ENCODE measurements at regions of chr4 and their contacts with region 1.

Region 1: GRCh38 chr4:168923526-168924194 is 86.4 kb downstream of the CBR4 start:
- DNase-seq: peak; percentile 12 to 65 (median 26)
- H3K4me3 ChIP-seq: no peak overlapping the region
- H3K4me3 Mint-ChIP-seq: no peak overlapping the region
- H3K27ac ChIP-seq: no peak overlapping the region
- H3K27ac Mint-ChIP-seq: no peak overlapping the region
- H3K4me1 ChIP-seq: no peaks in the 10 kb centered on the region
- H3K4me1 Mint-ChIP-seq: peaks cover 0 to 4% (median 0%) of the 10 kb centered on the region in 3 donors
- H3K27me3 ChIP-seq: no peaks in the 10 kb centered on the region
- H3K27me3 Mint-ChIP-seq: peaks cover 0 to 1% of the 10 kb centered on the region in 2 donors

Region 2: DNA sequence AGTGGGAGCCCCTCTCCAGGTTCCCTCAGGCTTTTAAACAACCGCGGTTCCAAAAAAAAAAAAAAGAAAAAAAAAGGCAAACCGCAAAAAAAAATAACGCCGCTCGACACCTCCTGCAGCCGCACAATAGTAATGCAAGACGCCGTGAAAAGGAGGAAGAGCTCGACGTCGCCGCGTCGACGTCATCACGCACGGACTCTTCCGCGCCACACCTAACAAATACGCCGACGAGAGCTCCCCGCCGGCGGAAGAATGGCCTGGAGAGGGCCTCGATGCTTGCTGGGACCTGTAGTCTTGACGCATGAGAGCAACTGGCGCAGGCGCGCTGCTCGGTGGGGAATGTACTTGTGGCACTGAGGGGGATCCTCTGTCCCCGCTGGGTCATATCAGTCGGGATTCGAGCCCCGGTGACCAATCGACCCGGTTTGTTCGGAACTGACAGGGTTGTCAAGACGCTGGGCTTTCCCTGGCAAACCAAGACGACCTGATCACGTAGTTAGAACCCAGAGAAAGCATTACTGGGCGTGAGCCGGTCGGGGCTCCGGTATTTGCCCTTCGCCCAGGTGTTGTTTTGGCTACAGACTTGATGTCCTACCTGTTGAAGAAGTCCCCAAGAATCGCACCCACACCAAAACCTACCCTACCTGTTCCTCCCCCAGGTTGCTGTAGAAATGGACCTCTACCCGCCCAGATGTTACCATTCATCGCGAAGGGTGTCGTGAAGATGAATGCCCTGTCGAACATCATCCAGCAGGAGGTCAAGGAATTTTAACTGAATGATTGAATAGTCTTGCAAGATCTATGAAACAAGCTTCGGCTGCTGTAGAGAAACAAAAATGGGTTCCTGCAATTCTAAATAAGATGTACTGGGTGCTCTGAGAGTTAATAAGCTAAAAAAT is 86.7 kb after region 1 on chr4 and contains the start of gene CBR4:
- CTCF ChIA-PET with region 1: interaction called, 12 read pairs
- POLR2A ChIA-PET with region 1: no interaction called
- DNase-seq: peak; percentile 94 to 98 (median 95)
- H3K4me3 ChIP-seq: peak within 1 kb of the TSS; percentile 97
- H3K4me3 Mint-ChIP-seq: peak within 1 kb of the TSS; percentile 92 to 97 (median 95)
- H3K27ac ChIP-seq: peak within 1 kb of the TSS; percentile 92
- H3K27ac Mint-ChIP-seq: peak within 1 kb of the TSS; percentile 94 to 98 (median 96)
- H3K4me1 ChIP-seq: peaks cover 24% of the 10 kb centered on the region
- H3K4me1 Mint-ChIP-seq: peaks cover 50 to 60% (median 52%) of the 10 kb centered on the region in 3 donors
- H3K27me3 ChIP-seq: no peaks in the 10 kb centered on the region
- H3K27me3 Mint-ChIP-seq: peaks cover 0 to 6% of the 10 kb centered on the region in 2 donors
- total RNA-seq, gene CBR4: 14.2 to 17.1 TPM

Region 3: GRCh38 chr4:169117591-169118081 is 194.0 kb after region 1 on chr4:
- CTCF ChIA-PET with region 1: no interaction called
- POLR2A ChIA-PET with region 1: no interaction called
- DNase-seq: no peak
- H3K4me3 ChIP-seq: no peak overlapping the region
- H3K4me3 Mint-ChIP-seq: no peak overlapping the region
- H3K27ac ChIP-seq: no peak overlapping the region
- H3K27ac Mint-ChIP-seq: peak overlapping the region in 2 of 8 donors; percentile 17 to 51
- H3K4me1 ChIP-seq: no peaks in the 10 kb centered on the region
- H3K4me1 Mint-ChIP-seq: no peaks in the 10 kb centered on the region
- H3K27me3 ChIP-seq: no peaks in the 10 kb centered on the region
- H3K27me3 Mint-ChIP-seq: peaks cover 3 to 9% of the 10 kb centered on the region in 2 donors

Region 4: DNA sequence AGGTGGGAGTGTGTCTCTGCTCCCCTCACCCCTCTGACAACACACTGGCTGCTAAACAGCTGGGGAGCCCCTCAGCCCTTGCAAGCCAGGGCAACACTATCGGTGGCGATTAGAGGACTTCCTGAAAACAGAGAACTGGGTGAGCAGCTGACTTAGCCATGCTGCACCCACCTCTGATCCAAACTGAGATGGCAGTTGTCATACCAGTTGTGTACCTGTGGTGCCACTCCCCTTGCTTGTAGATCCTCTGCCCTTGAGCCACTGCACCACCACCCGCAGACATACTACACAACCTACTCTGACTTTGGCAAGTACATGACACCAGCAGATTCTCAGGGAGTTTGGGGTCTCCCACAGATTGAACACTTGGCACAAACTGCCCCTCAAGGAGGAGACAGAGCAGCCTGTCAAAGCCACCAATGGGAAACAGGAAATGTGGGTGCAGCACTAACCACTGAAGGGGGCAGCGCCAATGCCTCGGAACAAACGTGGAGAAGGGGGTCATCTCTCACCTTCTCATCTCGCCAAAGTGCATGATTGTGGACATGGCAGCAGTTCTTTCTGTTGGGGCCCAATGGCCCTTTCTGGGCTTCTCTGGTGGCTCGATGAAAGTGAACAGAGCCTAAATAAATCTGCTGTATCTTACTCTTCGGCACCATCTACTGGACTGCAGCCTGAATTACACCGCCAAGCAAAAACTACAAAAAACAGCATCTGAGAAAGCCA is 568.9 kb after region 1 on chr4:
- CTCF ChIA-PET with region 1: interaction called, 10 read pairs
- POLR2A ChIA-PET with region 1: no interaction called
- DNase-seq: peak in 1 of 5 donors; percentile 4
- H3K4me3 ChIP-seq: no peak overlapping the region
- H3K4me3 Mint-ChIP-seq: peak overlapping the region in 1 of 7 donors; percentile 26
- H3K27ac ChIP-seq: no peak overlapping the region
- H3K27ac Mint-ChIP-seq: peak overlapping the region in 1 of 8 donors; percentile 52
- H3K4me1 ChIP-seq: no peaks in the 10 kb centered on the region
- H3K4me1 Mint-ChIP-seq: peaks cover 8 to 15% (median 8%) of the 10 kb centered on the region in 3 donors
- H3K27me3 ChIP-seq: no peaks in the 10 kb centered on the region
- H3K27me3 Mint-ChIP-seq: no peaks in the 10 kb centered on the region

Measured in CD8-positive, alpha-beta memory T cell (primary cell).